Body of pancreas (tissue), 4 donors: ENCODE measurements at regions of chr4 and their contacts with region 1.

Region 1: GRCh38 chr4:114694770-114695169 is 96.2 kb downstream of the UGT8 start:
- DNase-seq: no peak
- ATAC-seq: no peak
- H3K4me3 ChIP-seq: no peak overlapping the region
- H3K27ac ChIP-seq: no peak overlapping the region
- H3K4me1 ChIP-seq: no peaks in the 10 kb centered on the region
- H3K27me3 ChIP-seq: no peaks in the 10 kb centered on the region
- CTCF ChIP-seq: peak in 6 of 7 experiments; percentile 35 to 72 (median 64)
- POLR2A ChIP-seq: no peak

Region 2: GRCh38 chr4:113394730-113395530 is 1299.8 kb before region 1 on chr4:
- intact Hi-C with region 1: loop called (anchors 10 kb)
- DNase-seq: peak; percentile 55 to 78 (median 64)
- ATAC-seq: peak; percentile 98
- H3K4me3 ChIP-seq: no peak overlapping the region
- H3K27ac ChIP-seq: no peak overlapping the region
- H3K4me1 ChIP-seq: peaks cover 4% of the 10 kb centered on the region
- H3K27me3 ChIP-seq: no peaks in the 10 kb centered on the region
- CTCF ChIP-seq: peak; percentile 64 to 96 (median 79)
- POLR2A ChIP-seq: no peak